Colonic mucosa (tissue), 4 donors: ENCODE measurements at regions of chr9 and their contacts with region 1.

Region 1: GRCh38 chr9:12819436-12820185 is 44.8 kb downstream of the LURAP1L start:
- DNase-seq: no peak
- H3K4me3 ChIP-seq: no peak overlapping the region
- H3K27ac ChIP-seq: no peak overlapping the region
- H3K4me1 ChIP-seq: peaks cover 10% of the 10 kb centered on the region
- H3K27me3 ChIP-seq: no peaks in the 10 kb centered on the region
- CTCF ChIP-seq: peak; percentile 32

Region 2: GRCh38 chr9:12224449-12224848 is 595.2 kb before region 1 on chr9:
- intact Hi-C with region 1: no loop called
- DNase-seq: no peak
- H3K4me3 ChIP-seq: no peak overlapping the region
- H3K27ac ChIP-seq: no peak overlapping the region
- H3K4me1 ChIP-seq: no peaks in the 10 kb centered on the region
- H3K27me3 ChIP-seq: no peaks in the 10 kb centered on the region
- CTCF ChIP-seq: no peak

Region 3: GRCh38 chr9:12666813-12667212 is 152.8 kb before region 1 on chr9:
- intact Hi-C with region 1: no loop called
- DNase-seq: no peak
- H3K4me3 ChIP-seq: no peak overlapping the region
- H3K27ac ChIP-seq: no peak overlapping the region
- H3K4me1 ChIP-seq: no peaks in the 10 kb centered on the region
- H3K27me3 ChIP-seq: no peaks in the 10 kb centered on the region
- CTCF ChIP-seq: no peak

Region 4: GRCh38 chr9:12775679-12776512 is 43.7 kb before region 1 on chr9:
- intact Hi-C with region 1: loop called (anchors 5 kb)
- DNase-seq: peak; percentile 77
- H3K4me3 ChIP-seq: peak overlapping the region; percentile 69
- H3K27ac ChIP-seq: peak overlapping the region; percentile 96
- H3K4me1 ChIP-seq: no peaks in the 10 kb centered on the region
- H3K27me3 ChIP-seq: no peaks in the 10 kb centered on the region
- CTCF ChIP-seq: no peak